ENCODE measurements at regions of chr16 and their contacts with region 1.

Region 1: DNA sequence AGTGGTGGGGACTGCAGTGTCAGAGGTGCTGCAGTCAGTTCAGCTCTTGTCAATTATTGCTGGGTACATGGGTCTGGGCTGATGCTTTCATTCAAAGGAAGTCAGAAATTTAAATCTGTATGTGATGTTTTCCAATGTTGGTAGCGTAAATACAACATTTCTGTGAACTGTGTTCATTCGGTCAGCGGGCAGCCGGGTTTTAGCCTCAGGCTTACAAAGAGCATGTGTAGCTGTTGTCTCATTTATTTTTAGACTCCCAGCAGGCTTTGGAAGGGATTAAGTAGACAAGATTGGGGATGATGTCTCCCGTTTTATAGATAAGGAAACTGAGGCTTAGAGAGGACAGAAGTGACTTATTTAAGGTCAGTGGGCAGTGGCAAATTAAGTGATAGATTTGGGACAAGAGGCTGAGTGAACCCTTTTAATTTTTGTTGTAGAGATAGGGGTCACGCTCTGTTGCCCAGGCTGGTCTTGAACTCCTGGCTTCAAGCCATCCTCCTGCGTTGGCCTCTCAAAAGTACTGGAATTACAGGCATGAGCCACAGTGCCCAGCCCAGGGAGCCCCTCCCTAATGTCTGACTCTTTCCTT is 8.1 kb downstream of the AQP8 start:
- DNase-seq: no peak
- ATAC-seq: no peak
- H3K4me3 ChIP-seq: no peak overlapping the region
- H3K4me1 ChIP-seq: peaks cover 5% of the 10 kb centered on the region
- CTCF ChIP-seq: no peak

Region 2: DNA sequence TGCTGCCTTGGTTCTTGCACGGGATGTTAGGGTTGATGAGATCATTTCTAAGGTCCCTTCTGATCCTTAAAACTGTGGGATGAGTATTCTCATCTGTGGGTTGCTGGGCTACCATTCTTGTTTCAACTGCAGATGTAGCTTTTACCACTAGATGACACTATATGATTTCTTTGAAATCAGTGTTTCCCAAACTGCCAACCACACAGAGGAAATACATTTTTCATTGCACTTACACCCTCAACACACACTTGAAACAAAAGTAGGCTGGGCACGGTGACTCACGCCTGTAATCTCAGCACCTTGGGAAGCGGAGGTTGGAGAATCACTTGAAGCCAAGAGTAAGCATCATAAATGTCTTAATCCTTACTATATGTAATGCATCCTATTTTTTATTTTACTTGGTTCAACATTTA is 98.0 kb before region 1 on chr16:
- intact Hi-C with region 1: loop called in 1 of 2 experiments (anchors 10 kb)
- DNase-seq: peak; percentile 63 to 75 (median 72)
- ATAC-seq: peak; percentile 96
- H3K4me3 ChIP-seq: no peak overlapping the region
- H3K4me1 ChIP-seq: peaks cover 6% of the 10 kb centered on the region
- CTCF ChIP-seq: peak; percentile 27